AG04449 (cell line): ENCODE measurements at regions of chr14 and their contacts with region 1.

Region 1: GRCh38 chr14:30375296-30375892 is 183.6 kb upstream of the G2E3 start:
- DNase-seq: no peak
- H3K4me3 ChIP-seq: no peak overlapping the region
- CTCF ChIP-seq: peak; percentile 74

Region 2: DNA sequence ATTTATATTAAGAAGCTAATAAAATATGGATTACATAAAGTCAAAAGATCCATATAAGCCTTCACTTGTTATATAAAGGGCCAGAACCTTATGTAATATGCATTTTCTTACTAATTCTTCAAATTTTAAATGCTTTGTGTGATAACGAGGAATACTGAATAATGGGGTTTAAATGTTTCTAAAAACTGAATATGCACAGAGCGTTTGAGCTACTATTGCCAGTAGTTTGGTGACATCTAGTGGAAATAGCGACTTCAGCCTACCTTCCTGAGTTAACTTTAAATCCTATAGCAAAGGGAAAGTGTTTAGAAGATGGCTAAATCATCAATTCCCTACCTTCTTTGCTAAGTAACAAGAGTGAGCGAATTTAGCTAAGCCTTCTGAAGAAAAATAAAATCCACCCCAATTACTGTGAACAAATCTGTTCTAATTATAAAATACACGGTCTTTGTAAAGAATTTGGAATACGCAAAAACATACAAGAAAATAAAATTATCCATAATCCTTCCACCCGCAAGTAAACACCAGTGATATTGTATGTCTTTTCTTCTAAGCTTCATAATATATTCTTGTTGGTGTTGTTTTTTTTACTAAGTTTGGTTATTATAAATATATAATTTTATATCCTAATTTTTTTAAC is 68.1 kb after region 1 on chr14:
- CTCF ChIA-PET with region 1: interaction called, 14 read pairs
- POLR2A ChIA-PET with region 1: no interaction called
- DNase-seq: no peak
- H3K4me3 ChIP-seq: no peak overlapping the region
- CTCF ChIP-seq: peak; percentile 4

Region 3: DNA sequence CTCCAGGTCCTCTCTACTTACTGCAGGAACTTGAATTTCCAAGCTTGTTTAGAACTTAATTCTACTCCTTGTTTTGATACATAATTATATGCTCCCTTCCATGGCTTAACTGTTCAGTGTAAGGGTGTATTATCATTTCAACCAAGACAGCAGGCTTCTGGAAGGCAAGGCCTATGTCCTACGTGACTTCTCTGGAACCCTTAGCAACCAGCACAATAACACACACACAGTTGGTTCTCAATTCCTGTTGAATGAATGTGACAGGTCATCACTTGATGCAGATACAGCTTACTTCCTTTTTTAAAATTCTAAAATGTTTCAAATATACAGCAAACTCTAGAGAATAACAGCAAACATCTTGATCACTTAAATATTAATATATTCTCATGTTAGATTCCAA is 421.3 kb after region 1 on chr14:
- CTCF ChIA-PET with region 1: no interaction called
- POLR2A ChIA-PET with region 1: no interaction called
- DNase-seq: no peak
- H3K4me3 ChIP-seq: no peak overlapping the region
- CTCF ChIP-seq: no peak